Activated CD4-positive, alpha-beta T cell treated with anti-CD3 and anti-CD28 coated beads for 36 hours (primary cell): ENCODE measurements at regions of chr1 and their contacts with region 1.

Region 1: DNA sequence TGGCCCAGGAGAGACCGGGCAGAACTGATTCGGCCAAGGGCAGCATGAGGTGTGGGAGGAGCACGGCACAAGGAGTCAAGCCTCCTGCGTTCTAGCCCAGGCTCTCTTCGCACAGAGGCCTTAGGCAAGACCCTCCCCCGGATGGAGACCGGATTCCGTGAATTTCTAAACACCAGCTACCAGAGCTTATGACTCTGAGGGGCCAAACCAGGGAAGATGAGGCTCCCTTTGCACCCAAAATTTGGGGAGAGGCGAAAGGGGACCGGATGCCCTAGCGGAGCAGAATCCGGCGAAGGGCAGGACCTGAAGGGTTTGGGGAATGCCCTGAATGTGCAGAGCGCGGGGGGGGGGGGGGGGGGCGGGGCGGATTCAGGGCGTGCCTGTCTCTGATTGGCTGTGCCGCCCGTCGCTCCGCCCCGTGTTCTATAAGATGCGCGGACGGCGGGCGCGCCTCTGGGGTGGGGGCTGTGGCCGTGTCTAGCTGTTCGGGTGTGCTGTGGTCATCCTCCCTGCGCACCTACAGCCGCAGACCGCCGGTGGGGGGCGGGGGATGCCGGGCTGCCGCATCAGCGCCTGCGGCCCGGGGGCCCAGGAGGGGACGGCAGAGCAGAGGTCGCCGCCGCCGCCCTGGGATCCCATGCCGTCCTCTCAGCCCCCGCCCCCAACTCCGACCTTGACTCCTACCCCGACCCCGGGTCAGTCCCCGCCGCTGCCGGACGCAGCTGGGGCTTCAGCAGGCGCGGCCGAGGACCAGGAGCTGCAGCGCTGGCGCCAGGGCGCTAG is at the start of gene TRNP1:
- DNase-seq: peak; percentile 83
- ATAC-seq: peak; percentile 67
- H3K4me3 Mint-ChIP-seq: peak within 1 kb of the TSS; percentile 72
- H3K27ac Mint-ChIP-seq: peak within 1 kb of the TSS; percentile 63
- H3K4me1 Mint-ChIP-seq: peaks cover 19% of the 10 kb centered on the region
- H3K27me3 Mint-ChIP-seq: peaks cover 49% of the 10 kb centered on the region
- total RNA-seq, gene TRNP1: 0.62 to 0.69 TPM

Region 2: DNA sequence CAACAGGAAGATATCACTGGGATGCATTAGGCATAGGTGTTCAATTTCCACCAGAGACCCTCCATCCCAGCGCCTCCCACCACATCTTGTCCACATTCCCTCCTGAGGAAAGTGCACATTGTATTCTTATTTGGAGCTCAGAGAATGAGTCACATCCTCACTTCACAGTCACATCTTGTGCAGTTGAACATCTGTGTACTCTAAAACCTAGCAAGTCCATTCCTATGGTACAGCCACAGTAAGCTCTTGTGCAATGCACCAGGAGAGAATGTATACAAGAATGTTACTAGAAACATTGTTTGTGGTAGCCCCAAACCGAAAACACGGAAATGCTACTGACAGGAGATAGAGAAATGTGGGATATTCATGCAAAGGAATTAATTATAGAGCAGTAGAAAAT is 31.6 kb before region 1 on chr1:
- CTCF ChIA-PET with region 1: interaction called, 12 read pairs
- POLR2A ChIA-PET with region 1: no interaction called
- intact Hi-C with region 1: no loop called
- DNase-seq: no peak
- ATAC-seq: no peak
- H3K4me3 Mint-ChIP-seq: no peak overlapping the region
- H3K27ac Mint-ChIP-seq: no peak overlapping the region
- H3K4me1 Mint-ChIP-seq: peaks cover 4% of the 10 kb centered on the region
- H3K27me3 Mint-ChIP-seq: peaks cover 27% of the 10 kb centered on the region

Region 3: DNA sequence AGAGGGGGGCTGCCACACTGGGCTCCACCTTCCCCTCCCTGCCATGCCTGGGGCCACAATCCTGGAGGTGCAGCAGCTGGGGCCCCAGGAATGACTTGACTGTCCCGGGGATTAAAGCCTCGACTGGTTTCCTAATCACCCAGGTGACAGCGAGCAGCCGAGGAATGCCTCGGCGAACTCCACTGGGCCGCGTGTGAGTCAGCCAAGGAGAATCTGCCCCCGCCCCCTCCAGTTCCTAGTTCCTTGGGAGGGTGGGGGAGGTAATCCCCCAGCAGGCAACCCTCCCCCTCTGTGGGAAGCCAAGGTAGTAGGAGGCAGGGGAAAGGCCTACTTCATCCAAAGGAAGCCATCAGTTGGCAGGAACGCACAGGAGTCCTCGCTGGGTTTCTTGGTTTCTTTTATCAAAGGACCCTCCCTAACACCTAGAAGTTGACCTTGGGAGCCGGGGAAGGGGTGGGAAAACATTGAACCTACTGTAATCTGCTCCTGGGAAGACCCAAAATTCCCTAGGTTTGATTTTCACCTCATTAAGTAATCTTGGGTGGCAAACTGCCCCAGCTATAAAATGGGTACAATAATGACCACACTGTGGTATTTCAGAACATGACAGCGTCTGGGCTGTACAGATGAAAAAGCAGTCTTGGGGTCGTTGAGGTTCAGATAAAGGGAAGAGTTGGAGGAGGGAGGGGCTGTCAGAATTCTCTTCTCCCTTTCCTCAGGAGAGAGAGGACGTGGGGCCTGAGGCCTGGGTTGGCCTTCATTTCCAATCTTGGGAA is 17.7 kb after region 1 on chr1:
- CTCF ChIA-PET with region 1: interaction called, 4 read pairs
- POLR2A ChIA-PET with region 1: interaction called, 6 read pairs
- intact Hi-C with region 1: loop called (anchors 1 kb)
- DNase-seq: no peak
- ATAC-seq: no peak
- H3K4me3 Mint-ChIP-seq: no peak overlapping the region
- H3K27ac Mint-ChIP-seq: no peak overlapping the region
- H3K4me1 Mint-ChIP-seq: peaks cover 4% of the 10 kb centered on the region
- H3K27me3 Mint-ChIP-seq: peaks cover 23% of the 10 kb centered on the region